ENCODE measurements at regions of chr7 and their contacts with region 1.

Region 1: GRCh38 chr7:40329601-40330153 is 194.9 kb downstream of the SUGCT start:
- DNase-seq: peak; percentile 68
- H3K4me3 Mint-ChIP-seq: no peak overlapping the region
- H3K27ac Mint-ChIP-seq: no peak overlapping the region
- H3K4me1 Mint-ChIP-seq: no peaks in the 10 kb centered on the region
- H3K27me3 Mint-ChIP-seq: no peaks in the 10 kb centered on the region
- CTCF ChIP-seq: peak; percentile 78

Region 2: GRCh38 chr7:40199076-40199802 is 130.4 kb before region 1 on chr7:
- CTCF ChIA-PET with region 1: no interaction called
- POLR2A ChIA-PET with region 1: no interaction called
- intact Hi-C with region 1: no loop called
- DNase-seq: peak; percentile 35
- H3K4me3 Mint-ChIP-seq: no peak overlapping the region
- H3K27ac Mint-ChIP-seq: no peak overlapping the region
- H3K4me1 Mint-ChIP-seq: peaks cover 23% of the 10 kb centered on the region
- H3K27me3 Mint-ChIP-seq: no peaks in the 10 kb centered on the region
- CTCF ChIP-seq: peak; percentile 35

Region 3: GRCh38 chr7:40232242-40232893 is 97.3 kb before region 1 on chr7:
- CTCF ChIA-PET with region 1: interaction called, 22 read pairs
- POLR2A ChIA-PET with region 1: no interaction called
- intact Hi-C with region 1: loop called (anchors 2 kb)
- DNase-seq: peak; percentile 69
- H3K4me3 Mint-ChIP-seq: no peak overlapping the region
- H3K27ac Mint-ChIP-seq: peak overlapping the region; percentile 50
- H3K4me1 Mint-ChIP-seq: peaks cover 10% of the 10 kb centered on the region
- H3K27me3 Mint-ChIP-seq: no peaks in the 10 kb centered on the region
- CTCF ChIP-seq: peak; percentile 65

Region 4: DNA sequence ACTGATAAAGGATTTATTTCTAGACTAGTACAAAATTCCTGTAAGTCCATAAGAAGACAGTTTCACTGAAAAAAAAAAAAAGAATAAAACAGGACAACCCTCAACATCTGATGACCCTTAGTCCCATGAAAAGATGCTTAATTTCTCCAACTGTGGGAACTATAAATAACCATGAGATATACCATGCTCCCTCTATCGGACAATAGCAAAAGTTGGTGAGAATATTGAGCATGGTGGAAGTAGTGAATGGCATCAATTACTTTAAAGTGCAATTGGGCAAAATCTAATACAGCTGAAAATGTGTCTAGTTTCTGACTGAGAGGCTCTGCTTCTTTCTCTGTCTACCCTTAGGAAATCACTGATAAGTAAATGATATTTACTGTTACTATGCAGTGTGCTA is 154.0 kb after region 1 on chr7:
- CTCF ChIA-PET with region 1: no interaction called
- POLR2A ChIA-PET with region 1: no interaction called
- intact Hi-C with region 1: loop called (anchors 10 kb)
- DNase-seq: peak; percentile 9
- H3K4me3 Mint-ChIP-seq: no peak overlapping the region
- H3K27ac Mint-ChIP-seq: no peak overlapping the region
- H3K4me1 Mint-ChIP-seq: no peaks in the 10 kb centered on the region
- H3K27me3 Mint-ChIP-seq: no peaks in the 10 kb centered on the region
- CTCF ChIP-seq: no peak

Region 5: DNA sequence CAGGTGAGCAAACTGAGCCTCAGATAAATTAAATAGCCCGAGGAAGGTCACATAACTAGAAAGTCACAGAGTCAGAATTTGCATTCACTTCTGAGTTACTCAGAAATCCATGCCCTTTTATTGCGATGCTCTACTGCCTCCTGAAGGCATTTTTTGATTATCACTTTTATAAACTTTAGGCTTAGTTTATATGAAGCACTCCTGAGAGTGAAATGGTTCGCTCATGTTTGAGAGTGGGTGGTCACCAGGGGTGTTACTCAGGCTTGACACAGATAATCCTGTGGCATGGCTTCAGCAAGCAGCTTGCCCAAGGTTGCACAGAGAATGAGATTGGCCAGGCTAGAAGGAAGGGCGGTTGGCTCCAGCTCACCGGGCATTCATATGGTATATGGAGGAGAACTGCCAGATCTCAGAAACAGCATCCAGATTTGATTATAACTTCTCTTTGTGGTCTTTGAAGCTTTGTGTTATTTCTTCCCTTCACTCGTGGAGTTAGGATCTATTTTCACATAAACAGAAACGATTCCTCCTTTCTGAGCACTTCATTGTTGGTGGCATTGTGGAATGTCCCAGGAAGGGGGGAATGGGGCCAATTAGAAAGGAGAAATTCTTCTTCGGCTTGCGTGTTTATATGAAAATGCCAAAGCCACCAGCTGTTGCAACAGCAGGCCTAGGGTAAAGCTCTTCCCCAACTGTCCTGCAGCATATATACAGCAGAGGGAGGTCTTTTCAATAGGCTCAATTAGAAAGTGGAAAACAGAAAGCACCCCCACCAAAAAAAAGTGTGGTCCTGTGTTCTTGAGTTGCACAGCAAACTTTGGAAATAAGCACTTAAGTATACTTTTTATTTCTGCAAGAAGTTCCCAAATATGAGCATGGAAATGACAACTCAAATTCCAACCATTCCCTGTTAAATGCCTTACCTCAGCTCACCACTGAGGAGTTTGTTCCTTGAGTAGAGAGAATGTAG is 433.9 kb after region 1 on chr7:
- CTCF ChIA-PET with region 1: interaction called, 12 read pairs
- POLR2A ChIA-PET with region 1: no interaction called
- intact Hi-C with region 1: no loop called
- DNase-seq: peak; percentile 8
- H3K4me3 Mint-ChIP-seq: no peak overlapping the region
- H3K27ac Mint-ChIP-seq: no peak overlapping the region
- H3K4me1 Mint-ChIP-seq: no peaks in the 10 kb centered on the region
- H3K27me3 Mint-ChIP-seq: no peaks in the 10 kb centered on the region
- CTCF ChIP-seq: peak; percentile 9

Region 6: GRCh38 chr7:40833888-40834234 is 504.2 kb after region 1 on chr7:
- CTCF ChIA-PET with region 1: interaction called, 5 read pairs
- POLR2A ChIA-PET with region 1: no interaction called
- intact Hi-C with region 1: loop called (anchors 1 kb)
- DNase-seq: no peak
- H3K4me3 Mint-ChIP-seq: no peak overlapping the region
- H3K27ac Mint-ChIP-seq: no peak overlapping the region
- H3K4me1 Mint-ChIP-seq: peaks cover 17% of the 10 kb centered on the region
- H3K27me3 Mint-ChIP-seq: no peaks in the 10 kb centered on the region
- CTCF ChIP-seq: peak; percentile 31

Region 7: DNA sequence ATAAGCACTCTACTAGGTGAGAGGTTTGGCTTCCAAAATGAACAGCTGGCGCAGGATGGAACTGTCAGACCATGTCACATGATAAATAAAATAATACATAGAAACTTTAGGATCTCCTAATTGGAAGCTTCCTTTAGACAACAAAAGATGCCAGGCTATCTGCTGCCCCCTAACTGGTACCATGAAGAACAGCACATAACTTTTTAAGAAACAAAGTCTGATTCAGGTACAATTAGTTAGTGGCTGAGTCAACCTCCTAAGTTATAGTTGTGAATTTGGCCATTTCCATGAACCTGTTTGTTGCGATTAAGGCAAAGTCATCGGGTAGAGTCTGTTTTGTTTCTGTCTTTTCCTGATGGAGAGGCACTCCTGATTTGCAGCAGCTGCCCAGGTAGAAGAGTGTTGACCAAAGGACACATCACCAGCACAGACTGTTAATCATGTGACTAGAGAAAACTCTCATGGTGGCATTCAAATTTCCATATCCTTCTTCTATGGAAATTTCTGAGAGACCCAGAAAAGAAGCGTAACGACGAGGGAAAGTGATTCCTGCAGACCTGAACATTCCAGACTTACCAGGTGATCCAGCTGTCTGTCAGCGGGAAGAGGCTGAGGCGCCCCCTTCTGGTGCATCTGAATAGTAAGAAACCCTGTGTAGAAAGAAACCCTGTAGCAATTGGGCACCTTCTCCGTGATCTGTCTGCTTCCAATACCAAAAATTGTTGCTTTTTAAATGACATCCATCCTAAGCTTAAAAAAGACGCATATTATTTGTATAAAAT is 1381.8 kb after region 1 on chr7:
- CTCF ChIA-PET with region 1: interaction called, 74 read pairs
- POLR2A ChIA-PET with region 1: no interaction called
- intact Hi-C with region 1: loop called (anchors 1 kb)
- DNase-seq: peak; percentile 57
- H3K4me3 Mint-ChIP-seq: no peak overlapping the region
- H3K27ac Mint-ChIP-seq: no peak overlapping the region
- H3K4me1 Mint-ChIP-seq: no peaks in the 10 kb centered on the region
- H3K27me3 Mint-ChIP-seq: no peaks in the 10 kb centered on the region
- CTCF ChIP-seq: peak; percentile 27

Region 8: DNA sequence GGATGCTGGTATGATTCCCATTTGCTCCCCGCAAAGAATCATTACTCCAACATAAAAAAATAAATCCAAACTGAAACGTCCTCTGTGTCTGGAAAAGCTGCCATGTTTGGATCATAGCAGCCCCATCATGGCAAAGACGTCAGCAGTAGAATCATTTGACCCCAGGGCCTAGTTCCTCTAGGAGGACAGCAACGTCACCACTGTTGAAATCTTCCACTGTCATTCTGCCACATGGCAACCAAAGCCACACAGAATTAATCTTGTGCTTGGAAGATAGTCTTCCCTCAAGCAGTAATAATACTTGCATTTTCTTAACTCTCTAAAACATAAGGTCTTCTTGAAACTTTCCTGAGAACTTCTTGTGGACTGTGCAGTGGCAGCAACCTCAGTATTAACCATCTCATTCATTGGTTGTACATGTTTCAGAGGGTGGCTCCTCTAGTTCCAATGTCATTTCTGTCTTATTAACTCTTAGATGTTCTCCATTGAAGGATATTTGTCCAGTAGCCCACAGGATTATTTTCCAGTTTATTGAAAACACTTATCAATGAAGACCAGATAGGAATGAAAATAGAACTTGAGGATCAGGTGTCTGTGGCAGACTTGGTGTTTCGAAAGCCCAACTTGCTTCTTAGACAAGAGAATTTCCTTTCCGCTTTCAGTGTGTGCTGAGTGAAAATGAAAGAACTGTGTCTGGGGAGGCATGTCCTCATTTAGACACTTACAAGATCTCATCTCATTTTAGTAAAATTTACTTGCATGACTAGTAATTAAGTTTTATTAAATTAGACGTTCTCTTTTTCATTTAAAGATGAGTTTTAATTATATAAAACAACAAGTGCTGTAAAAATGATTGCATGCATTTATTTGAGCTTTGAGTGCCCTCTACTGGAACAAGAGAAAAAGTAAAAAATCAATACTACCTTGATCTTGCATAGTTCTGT is 1402.1 kb after region 1 on chr7:
- CTCF ChIA-PET with region 1: interaction called, 6 read pairs
- POLR2A ChIA-PET with region 1: no interaction called
- intact Hi-C with region 1: loop called (anchors 1 kb)
- DNase-seq: peak; percentile 26
- H3K4me3 Mint-ChIP-seq: no peak overlapping the region
- H3K27ac Mint-ChIP-seq: no peak overlapping the region
- H3K4me1 Mint-ChIP-seq: no peaks in the 10 kb centered on the region
- H3K27me3 Mint-ChIP-seq: peaks cover 17% of the 10 kb centered on the region
- CTCF ChIP-seq: peak; percentile 47

Measured in MCF 10A (cell line).